ENCODE measurements at regions of chr4 and their contacts with region 1.

Region 1: GRCh38 chr4:18844726-18845125 is 823.2 kb upstream of the LCORL start:
- DNase-seq: no peak
- H3K4me3 ChIP-seq: no peak overlapping the region
- H3K27ac ChIP-seq: no peak overlapping the region
- H3K4me1 ChIP-seq: peaks cover 0 to 1% (median 0%) of the 10 kb centered on the region in 4 donors
- H3K27me3 ChIP-seq: no peaks in the 10 kb centered on the region
- CTCF ChIP-seq: no peak
- EP300 ChIP-seq: no peak
- POLR2A ChIP-seq: no peak

Region 2: DNA sequence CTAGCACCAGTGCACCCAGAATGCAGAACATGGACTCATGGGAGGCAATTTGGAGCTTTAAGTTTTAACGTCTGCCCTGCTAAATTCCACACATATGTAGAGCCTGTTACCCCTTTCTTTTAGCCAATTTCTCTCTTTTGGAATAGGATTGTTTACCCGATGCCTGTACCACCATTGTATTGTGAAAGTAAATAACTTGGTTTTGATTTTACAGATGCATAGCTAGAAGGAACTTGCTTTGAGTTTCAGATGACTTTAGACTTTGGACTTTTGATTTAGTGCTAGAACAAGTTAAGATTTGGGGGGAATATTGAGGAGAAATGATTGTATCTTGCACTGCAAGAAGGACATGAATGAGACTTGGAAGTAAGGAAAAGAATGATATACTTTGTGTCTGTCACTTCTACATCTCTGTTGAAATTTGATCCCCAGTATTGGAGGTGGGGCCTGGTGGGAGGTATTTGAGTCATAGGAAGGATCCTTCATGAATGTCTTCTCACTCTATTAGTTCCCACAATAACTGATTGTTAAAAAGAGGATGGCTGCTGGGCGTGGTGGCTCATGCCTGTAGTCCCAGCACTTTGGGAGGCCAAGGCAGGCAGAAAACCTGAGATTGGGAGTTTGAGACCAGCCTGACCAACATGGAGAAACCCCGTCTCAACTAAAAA is 28.4 kb before region 1 on chr4:
- intact Hi-C with region 1: loop called (anchors 1 kb)
- DNase-seq: no peak
- H3K4me3 ChIP-seq: no peak overlapping the region
- H3K27ac ChIP-seq: no peak overlapping the region
- H3K4me1 ChIP-seq: no peaks in the 10 kb centered on the region
- H3K27me3 ChIP-seq: no peaks in the 10 kb centered on the region
- CTCF ChIP-seq: no peak
- EP300 ChIP-seq: no peak
- POLR2A ChIP-seq: no peak

Region 3: GRCh38 chr4:18938343-18939099 is 93.8 kb after region 1 on chr4:
- intact Hi-C with region 1: no loop called
- DNase-seq: no peak
- H3K4me3 ChIP-seq: no peak overlapping the region
- H3K27ac ChIP-seq: no peak overlapping the region
- H3K4me1 ChIP-seq: no peaks in the 10 kb centered on the region
- H3K27me3 ChIP-seq: no peaks in the 10 kb centered on the region
- CTCF ChIP-seq: no peak
- EP300 ChIP-seq: no peak
- POLR2A ChIP-seq: no peak

Measured in esophagus muscularis mucosa (tissue), 4 donors.